AG04449 (cell line): ENCODE measurements at regions of chr6 and their contacts with region 1.

Region 1: DNA sequence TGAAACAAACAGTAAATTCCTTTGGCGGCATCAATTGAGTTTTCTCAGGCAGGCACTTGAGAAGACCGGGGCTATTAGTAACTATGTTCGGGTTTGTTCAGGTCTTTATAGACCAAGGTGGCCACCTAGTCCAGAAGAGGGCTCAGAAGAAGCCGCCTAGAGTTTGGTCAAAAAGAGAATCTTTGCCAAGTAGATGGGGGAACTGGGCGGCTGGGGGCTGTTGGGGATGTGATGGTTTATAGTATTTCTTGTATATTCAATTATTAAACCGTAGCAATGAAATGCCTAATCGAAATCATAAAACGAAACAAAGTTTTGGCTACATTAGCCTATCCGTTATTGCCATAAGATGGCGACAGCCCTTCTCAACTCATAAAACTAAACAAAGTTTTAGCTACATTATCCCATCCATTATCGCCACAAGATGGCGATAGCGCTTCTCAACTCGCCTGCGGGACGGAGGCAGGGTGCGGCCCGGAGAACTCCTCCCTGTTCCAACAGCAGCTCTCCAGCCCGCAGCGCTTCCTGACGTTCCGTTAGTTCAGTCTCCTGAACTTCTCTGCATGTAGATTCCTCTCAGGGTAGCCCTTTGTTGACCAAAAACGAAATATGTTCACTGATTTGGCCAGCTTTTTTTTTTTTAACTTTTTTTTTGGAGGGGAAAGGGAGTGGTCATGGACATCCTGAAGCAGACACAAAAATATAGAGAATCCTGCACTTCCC is 120.5 kb upstream of the PRSS16 start:
- DNase-seq: peak; percentile 38
- H3K4me3 ChIP-seq: peak overlapping the region; percentile 52
- CTCF ChIP-seq: peak; percentile 72

Region 2: GRCh38 chr6:27157459-27158315 is 30.7 kb after region 1 on chr6:
- CTCF ChIA-PET with region 1: interaction called, 27 read pairs
- POLR2A ChIA-PET with region 1: interaction called, 6 read pairs
- DNase-seq: peak; percentile 40
- H3K4me3 ChIP-seq: peak overlapping the region; percentile 59
- CTCF ChIP-seq: peak; percentile 50

Region 3: GRCh38 chr6:27251606-27252251 is 124.8 kb after region 1 on chr6:
- CTCF ChIA-PET with region 1: no interaction called
- POLR2A ChIA-PET with region 1: no interaction called
- DNase-seq: no peak
- H3K4me3 ChIP-seq: peak overlapping the region; percentile 54
- CTCF ChIP-seq: peak; percentile 20

Region 4: DNA sequence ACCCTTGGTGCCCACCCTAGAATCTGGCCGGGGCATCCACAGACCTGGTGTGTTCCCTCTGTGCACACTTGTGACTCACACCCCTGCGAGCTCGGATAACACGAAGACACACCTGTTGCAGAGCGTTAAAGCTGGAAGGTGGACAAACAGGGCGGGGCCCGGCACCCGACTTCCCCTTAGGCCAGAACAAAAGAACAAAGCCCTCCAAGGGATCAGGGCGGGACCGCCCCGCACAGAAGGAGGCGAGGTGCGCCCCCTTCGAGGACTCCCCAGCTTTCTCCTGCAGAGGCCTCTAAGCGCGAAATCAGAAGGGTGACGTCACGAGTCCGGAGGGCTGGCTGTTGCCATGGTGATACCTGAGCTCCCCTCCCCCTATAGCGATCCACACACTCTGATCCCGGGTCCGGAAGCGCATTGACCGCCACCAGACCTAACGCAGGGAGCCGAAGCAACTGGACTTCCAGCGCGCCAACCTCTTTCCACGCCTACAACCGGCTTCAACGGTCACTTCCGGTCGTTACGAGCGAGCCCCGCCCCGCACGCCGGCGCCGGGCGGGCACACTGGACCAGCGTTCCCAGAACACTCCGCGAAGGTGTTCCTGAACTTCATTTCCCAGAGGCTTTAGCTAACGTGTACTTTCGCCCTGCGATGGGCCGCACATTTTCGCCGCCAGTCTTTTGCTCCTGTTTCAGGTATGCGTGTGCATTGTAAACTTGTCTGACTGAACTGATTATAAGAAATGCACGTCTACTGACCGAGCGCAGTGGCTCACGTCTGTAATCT is 345.8 kb after region 1 on chr6 and contains the start of gene ZNF184:
- CTCF ChIA-PET with region 1: no interaction called
- POLR2A ChIA-PET with region 1: no interaction called
- DNase-seq: peak; percentile 83
- H3K4me3 ChIP-seq: peak within 1 kb of the TSS; percentile 96
- CTCF ChIP-seq: no peak